Breast epithelium (tissue), 4 donors: ENCODE measurements at regions of chr3 and their contacts with region 1.

Region 1: GRCh38 chr3:42190701-42191462 is 75.1 kb downstream of the CCK start:
- DNase-seq: peak; percentile 48 to 65
- H3K4me3 ChIP-seq: no peak overlapping the region
- H3K27ac ChIP-seq: peak overlapping the region in 1 of 2 donors; percentile 21
- H3K4me1 ChIP-seq: no peaks in the 10 kb centered on the region
- H3K27me3 ChIP-seq: no peaks in the 10 kb centered on the region
- CTCF ChIP-seq: peak; percentile 72 to 86 (median 82)
- POLR2A ChIP-seq: no peak

Region 2: DNA sequence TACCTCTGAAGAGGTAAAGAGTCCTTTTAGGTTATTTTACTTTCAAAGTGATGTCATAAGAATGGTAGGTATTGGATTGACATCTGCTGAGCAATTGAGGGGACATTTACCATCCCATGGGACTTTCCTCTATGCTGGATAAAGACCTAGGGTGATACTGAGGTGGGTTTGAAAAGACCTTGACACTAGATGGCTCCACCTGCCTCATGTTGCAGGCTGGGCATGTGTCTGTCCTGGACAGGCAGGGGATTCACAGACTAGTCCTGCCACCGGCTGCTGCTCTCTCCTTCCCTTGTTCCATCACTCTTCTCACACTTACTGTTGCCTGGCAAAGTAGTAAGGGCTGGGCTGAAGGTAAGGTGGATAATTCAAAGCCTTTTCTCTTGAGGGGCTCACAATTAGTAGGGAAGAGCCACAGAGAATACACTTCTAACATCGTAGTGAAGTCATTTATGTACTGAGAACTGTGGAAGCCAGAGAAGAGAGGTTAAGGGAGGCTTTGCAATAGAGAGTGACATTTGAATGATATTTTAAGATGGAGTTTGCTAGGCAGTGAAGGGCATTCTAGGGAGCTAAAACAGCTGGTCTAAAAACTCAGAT is 72.0 kb before region 1 on chr3:
- intact Hi-C with region 1: loop called (anchors 5 kb)
- DNase-seq: peak in 1 of 2 donors; percentile 48
- H3K4me3 ChIP-seq: no peak overlapping the region
- H3K27ac ChIP-seq: peak overlapping the region; percentile 49 to 81
- H3K4me1 ChIP-seq: peaks cover 9 to 38% of the 10 kb centered on the region in 2 donors
- H3K27me3 ChIP-seq: no peaks in the 10 kb centered on the region
- CTCF ChIP-seq: peak in 2 of 3 donors; percentile 40 to 57
- POLR2A ChIP-seq: no peak

Region 3: DNA sequence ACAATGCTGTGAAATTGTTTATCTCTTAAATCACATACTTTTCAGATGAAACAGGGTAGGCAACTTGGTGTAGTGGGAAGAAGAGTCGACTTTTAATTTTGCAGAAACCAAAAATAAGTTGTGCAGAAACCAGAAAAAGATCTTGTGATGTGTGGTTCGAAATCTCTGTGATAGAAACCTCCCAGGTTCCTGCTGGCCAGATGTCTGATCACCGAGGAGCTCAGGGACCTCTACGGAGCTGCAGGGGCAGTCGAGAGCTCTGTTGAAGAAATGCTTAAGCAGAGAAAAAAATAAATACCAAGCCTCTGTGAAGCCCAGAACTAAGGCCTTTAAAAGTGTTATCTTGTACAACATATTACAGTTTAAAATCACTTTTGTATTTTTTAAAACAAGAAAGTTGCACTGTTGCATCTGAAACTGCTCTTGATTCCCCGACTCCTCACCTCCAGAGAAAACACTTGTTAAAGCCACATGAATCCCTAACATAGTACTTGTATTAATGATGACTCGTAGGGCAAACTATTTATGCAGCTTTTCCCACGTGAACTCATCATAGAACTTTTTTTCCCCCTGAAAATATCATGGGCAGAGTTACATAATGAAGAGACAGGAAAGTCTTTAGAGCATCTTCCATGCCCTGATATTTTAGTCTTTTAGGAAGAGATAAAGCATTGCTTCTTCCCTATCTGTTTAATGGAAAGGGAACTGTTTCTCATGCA is 23.8 kb after region 1 on chr3:
- intact Hi-C with region 1: no loop called
- DNase-seq: no peak
- H3K4me3 ChIP-seq: no peak overlapping the region
- H3K27ac ChIP-seq: no peak overlapping the region
- H3K4me1 ChIP-seq: no peaks in the 10 kb centered on the region
- H3K27me3 ChIP-seq: no peaks in the 10 kb centered on the region
- CTCF ChIP-seq: no peak
- POLR2A ChIP-seq: no peak

Region 4: DNA sequence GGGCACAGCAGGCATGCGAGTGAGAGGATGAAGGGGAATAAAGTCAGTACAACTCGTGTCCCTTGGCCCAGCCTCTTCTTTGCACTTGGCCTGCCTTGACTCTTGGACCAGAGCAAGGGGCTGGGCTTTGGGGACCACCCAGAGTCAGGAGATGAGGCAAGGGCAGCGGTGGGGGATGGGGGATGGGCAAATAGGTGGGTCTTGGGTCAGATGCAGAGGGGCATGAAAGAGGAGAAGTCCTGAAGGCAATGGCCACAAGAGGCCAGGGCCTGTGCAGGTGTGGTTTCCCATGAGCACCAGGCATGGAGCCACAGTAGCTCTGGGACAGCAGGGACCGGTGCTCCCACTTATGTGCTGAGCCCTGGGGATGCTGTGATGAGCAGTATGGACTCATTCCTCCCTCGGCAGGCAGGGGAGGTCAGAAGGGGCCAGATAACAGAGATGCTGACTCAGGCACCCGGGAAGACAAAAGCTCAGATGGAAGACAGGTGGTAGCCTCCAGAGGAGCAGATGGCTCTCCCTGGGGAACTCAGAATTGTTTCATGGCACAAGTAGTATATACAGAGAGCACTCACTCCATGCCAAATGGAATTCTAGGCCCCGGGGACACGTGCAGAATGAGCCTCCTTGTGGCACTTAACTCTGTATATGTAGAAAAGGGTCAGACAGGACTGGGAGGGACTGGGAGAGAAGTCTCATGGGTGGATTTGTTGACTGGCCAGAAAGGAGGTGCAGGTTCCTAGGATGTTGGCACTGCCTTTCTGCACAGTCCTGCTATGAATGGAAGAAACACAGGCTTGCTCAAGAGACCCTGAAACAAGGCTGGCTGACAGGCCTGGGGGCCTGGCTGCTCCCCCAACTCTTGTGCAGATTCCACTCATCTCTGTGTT is 476.9 kb after region 1 on chr3:
- intact Hi-C with region 1: no loop called
- DNase-seq: no peak
- H3K4me3 ChIP-seq: no peak overlapping the region
- H3K27ac ChIP-seq: no peak overlapping the region
- H3K4me1 ChIP-seq: no peaks in the 10 kb centered on the region
- H3K27me3 ChIP-seq: no peaks in the 10 kb centered on the region
- CTCF ChIP-seq: no peak
- POLR2A ChIP-seq: no peak